Activated CD4-positive, alpha-beta memory T cell treated with anti-CD3 and anti-CD28 coated beads, Interleukin-2, amount 10 ng/mL, durations not matched to agents 7 days and 5 days (primary cell): ENCODE measurements at regions of chr4 and their contacts with region 1.

Region 1: GRCh38 chr4:7067452-7068278 is at the start of gene GRPEL1:
- DNase-seq: peak; percentile 100
- H3K4me3 Mint-ChIP-seq: peak within 1 kb of the TSS; percentile 90
- H3K27ac Mint-ChIP-seq: peak within 1 kb of the TSS; percentile 88
- H3K4me1 Mint-ChIP-seq: peaks cover 54% of the 10 kb centered on the region
- H3K27me3 Mint-ChIP-seq: peaks cover 14% of the 10 kb centered on the region
- total RNA-seq, gene GRPEL1: 39.8 to 40.0 TPM

Region 2: DNA sequence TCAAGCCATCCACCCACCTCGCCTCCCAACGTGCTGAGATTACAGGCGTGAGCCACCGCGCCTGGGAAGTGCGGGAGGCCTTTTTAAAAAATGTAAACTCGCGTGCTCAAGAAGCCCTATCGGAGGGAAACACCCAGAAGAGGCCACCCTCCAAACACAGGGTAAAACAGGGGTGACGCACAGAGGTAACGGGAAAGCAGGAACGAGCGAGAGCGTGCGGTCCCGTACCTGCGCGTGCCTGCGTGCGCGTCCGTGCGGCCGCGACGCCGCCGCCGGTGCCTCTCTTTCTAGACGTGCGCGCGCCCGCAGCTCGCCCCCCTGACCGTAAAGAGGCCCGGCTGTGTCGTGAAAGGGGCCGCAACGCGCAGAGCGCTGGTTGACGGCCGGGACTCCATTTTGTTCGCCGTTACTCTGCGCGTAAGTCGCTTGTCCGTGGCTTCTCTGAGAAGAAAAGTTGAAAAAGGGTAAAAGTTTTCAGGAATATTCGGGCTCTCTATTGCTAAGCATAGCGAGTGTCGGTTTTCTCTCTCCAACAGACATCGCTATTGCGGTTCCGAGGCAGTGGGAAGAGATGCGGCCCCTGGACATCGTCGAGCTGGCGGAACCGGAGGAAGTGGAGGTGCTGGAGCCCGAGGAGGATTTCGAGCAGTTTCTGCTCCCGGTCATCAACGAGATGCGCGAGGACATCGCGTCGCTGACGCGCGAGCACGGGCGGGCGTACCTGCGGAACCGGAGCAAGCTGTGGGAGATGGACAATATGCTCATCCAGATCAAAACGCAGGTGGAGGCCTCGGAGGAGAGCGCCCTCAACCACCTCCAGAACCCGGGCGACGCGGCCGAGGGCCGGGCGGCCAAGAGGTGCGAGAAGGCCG is 427.1 kb before region 1 on chr4 and contains the start of gene MRFAP1:
- CTCF ChIA-PET with region 1: no interaction called
- POLR2A ChIA-PET with region 1: interaction called, 16 read pairs
- DNase-seq: peak; percentile 96
- H3K4me3 Mint-ChIP-seq: peak within 1 kb of the TSS; percentile 98
- H3K27ac Mint-ChIP-seq: peak within 1 kb of the TSS; percentile 100
- H3K4me1 Mint-ChIP-seq: peaks cover 23% of the 10 kb centered on the region
- H3K27me3 Mint-ChIP-seq: no peaks in the 10 kb centered on the region
- total RNA-seq, gene MRFAP1: 142 to 144 TPM

Region 3: GRCh38 chr4:6695660-6696630 is 371.7 kb before region 1 on chr4:
- CTCF ChIA-PET with region 1: interaction called, 3 read pairs
- POLR2A ChIA-PET with region 1: interaction called, 18 read pairs
- DNase-seq: peak; percentile 77
- H3K4me3 Mint-ChIP-seq: peak overlapping the region; percentile 61
- H3K27ac Mint-ChIP-seq: peak overlapping the region; percentile 92
- H3K4me1 Mint-ChIP-seq: peaks cover 88% of the 10 kb centered on the region
- H3K27me3 Mint-ChIP-seq: no peaks in the 10 kb centered on the region

Region 4: DNA sequence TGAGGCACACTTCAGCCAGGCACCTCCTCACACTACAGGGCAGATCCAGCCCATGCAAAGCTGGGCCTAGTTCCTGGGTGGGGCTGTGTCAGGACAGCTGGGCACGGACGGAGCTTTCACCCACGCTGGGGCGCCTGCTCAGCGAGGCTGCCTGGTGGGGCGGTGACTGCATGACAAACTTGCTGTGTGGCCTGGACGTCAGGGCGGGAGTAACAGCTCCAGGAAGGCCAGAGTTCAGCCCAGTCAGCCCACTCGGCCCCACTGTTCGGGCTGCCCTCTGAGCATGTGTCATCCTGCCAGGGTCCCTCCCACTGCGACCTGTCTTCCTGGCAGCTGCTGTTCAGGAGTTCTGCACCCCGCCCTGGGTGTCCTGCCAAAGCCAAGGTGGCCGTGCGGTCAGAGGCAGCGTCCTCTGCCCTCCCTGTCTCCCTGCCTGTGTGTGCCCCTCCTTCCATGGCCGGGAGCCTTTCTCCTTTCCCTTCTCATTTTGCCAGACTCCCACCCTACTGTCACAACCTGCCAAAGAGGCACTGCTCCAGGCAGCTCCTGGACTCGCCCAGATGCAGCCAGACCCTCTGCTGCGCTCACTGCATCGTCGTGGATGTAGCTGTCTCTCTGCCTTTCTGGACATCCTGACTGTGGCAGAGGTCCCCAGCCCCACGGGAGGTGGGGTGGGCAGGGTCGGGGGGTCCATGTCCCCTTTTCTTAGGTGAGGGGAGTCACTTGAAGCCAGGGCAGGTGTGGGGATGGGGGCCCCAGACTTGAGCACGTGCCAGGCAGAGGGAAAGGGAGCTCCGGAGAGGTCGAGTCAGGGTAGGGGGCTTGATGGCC is 318.1 kb before region 1 on chr4:
- CTCF ChIA-PET with region 1: no interaction called
- POLR2A ChIA-PET with region 1: no interaction called
- DNase-seq: no peak
- H3K4me3 Mint-ChIP-seq: no peak overlapping the region
- H3K27ac Mint-ChIP-seq: no peak overlapping the region
- H3K4me1 Mint-ChIP-seq: peaks cover 18% of the 10 kb centered on the region
- H3K27me3 Mint-ChIP-seq: peaks cover 2% of the 10 kb centered on the region

Region 5: GRCh38 chr4:6806924-6807636 is 260.6 kb before region 1 on chr4:
- CTCF ChIA-PET with region 1: no interaction called
- POLR2A ChIA-PET with region 1: no interaction called
- DNase-seq: no peak
- H3K4me3 Mint-ChIP-seq: no peak overlapping the region
- H3K27ac Mint-ChIP-seq: no peak overlapping the region
- H3K4me1 Mint-ChIP-seq: peaks cover 2% of the 10 kb centered on the region
- H3K27me3 Mint-ChIP-seq: no peaks in the 10 kb centered on the region

Region 6: DNA sequence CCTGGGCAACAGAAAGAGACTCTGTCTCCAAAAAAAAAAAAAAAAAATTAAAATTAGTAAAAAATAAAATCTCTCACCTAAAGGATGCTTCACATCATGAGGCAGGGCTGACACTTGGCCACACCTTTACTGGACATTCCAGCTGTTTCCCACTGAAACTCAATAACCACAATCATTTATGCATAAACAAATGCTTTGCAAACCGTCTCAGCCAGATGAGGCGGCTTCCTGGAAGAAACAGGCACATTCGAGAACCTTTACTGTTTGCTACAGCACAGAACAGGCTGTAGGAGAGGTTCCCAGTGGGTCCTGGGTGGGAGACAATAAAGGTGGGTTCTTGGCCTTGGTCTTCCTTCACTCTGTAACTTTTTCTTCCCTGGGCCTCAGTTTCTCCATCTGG is 168.9 kb before region 1 on chr4:
- CTCF ChIA-PET with region 1: interaction called, 3 read pairs
- POLR2A ChIA-PET with region 1: interaction called, 32 read pairs
- DNase-seq: peak; percentile 39
- H3K4me3 Mint-ChIP-seq: peak overlapping the region; percentile 40
- H3K27ac Mint-ChIP-seq: peak overlapping the region; percentile 94
- H3K4me1 Mint-ChIP-seq: peaks cover 63% of the 10 kb centered on the region
- H3K27me3 Mint-ChIP-seq: no peaks in the 10 kb centered on the region

Region 7: DNA sequence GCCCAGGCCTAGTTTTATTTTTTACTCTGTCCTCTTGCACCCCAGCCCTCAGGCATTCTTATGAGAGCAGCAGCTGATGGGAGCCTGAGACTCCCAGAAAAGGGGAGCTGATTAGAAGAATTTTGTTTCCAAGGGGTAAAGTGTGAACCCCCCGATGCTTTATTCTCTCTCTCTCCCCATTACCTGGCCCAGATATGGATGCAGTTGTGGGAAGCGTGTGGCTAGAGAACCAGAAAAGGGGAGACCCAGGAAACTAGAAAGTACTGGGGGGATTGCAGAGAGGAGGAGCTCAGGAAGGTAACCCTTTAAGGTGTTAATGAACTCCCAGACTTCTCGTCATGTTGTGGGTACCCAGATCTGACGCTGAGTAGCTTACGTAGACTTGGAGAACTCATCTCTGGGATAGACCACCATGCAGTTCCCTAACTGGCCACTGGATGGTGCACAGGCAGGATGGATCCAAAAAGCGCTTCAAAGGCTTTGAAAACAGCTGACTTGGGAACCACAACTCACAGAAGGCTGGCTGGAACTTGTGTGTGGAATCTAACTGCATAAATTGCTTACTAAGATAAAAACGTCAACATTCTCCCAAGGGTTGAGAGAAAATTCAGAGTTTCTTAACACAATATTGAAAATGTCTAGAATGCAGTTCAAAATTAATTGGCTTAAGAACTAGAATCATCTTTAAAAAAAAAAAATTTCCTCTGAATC is 93.4 kb before region 1 on chr4:
- CTCF ChIA-PET with region 1: interaction called, 38 read pairs
- POLR2A ChIA-PET with region 1: interaction called, 10 read pairs
- DNase-seq: peak; percentile 83
- H3K4me3 Mint-ChIP-seq: no peak overlapping the region
- H3K27ac Mint-ChIP-seq: no peak overlapping the region
- H3K4me1 Mint-ChIP-seq: peaks cover 19% of the 10 kb centered on the region
- H3K27me3 Mint-ChIP-seq: no peaks in the 10 kb centered on the region

Region 8: DNA sequence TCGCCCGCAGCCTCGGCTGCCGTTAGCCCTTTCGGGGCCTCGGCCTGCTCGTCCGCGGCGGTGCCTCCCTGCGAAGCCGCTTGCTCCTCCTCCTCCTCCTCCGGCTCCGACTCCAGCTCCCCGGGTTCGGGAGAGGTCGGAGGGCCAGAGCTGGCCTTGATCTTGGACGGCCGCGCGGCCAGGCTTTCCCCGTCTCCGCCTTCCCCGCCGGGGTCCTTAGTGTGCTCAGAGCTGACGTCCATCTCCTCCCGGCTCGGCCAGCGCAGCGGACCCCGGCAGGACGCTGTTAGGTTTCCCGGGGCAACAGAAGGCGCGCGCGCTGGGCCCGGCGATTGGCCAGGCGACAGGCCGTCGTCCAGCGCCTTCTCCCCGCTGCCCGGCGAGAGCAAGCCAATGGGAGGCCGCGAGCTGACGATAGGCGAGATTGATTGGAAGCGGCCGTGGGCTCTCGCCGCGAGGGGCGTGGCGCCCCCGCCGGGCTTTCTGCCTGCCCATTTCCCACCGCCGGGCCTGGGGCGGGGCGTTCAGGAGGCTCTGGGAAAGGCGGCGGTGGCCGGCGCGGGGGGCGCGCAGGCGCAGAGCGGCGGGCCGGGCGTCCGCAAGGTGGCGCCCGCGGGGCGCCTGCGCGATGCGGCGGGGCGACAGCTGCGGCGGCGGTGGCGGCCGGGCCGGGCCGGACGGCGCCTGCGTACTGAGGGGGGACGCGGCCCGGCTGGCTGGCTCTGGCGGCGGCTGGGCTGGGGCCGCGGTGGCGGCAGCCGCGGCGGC is 24.8 kb before region 1 on chr4 and contains the start of gene TADA2B:
- CTCF ChIA-PET with region 1: interaction called, 127 read pairs
- POLR2A ChIA-PET with region 1: interaction called, 187 read pairs
- DNase-seq: peak; percentile 96
- H3K4me3 Mint-ChIP-seq: peak within 1 kb of the TSS; percentile 94
- H3K27ac Mint-ChIP-seq: peak within 1 kb of the TSS; percentile 78
- H3K4me1 Mint-ChIP-seq: peaks cover 50% of the 10 kb centered on the region
- H3K27me3 Mint-ChIP-seq: peaks cover 10% of the 10 kb centered on the region
- total RNA-seq, gene TADA2B: 26.6 to 27.3 TPM

Region 9: GRCh38 chr4:7206911-7207567 is 139.4 kb after region 1 on chr4:
- CTCF ChIA-PET with region 1: no interaction called
- POLR2A ChIA-PET with region 1: no interaction called
- DNase-seq: no peak
- H3K4me3 Mint-ChIP-seq: no peak overlapping the region
- H3K27ac Mint-ChIP-seq: no peak overlapping the region
- H3K4me1 Mint-ChIP-seq: no peaks in the 10 kb centered on the region
- H3K27me3 Mint-ChIP-seq: peaks cover 3% of the 10 kb centered on the region